ENCODE measurements at regions of chr18 and their contacts with region 1.

Region 1: GRCh38 chr18:47754311-47755101 is 176.0 kb downstream of the SMAD2 start:
- DNase-seq: no peak
- ATAC-seq: peak; percentile 48

Region 2: DNA sequence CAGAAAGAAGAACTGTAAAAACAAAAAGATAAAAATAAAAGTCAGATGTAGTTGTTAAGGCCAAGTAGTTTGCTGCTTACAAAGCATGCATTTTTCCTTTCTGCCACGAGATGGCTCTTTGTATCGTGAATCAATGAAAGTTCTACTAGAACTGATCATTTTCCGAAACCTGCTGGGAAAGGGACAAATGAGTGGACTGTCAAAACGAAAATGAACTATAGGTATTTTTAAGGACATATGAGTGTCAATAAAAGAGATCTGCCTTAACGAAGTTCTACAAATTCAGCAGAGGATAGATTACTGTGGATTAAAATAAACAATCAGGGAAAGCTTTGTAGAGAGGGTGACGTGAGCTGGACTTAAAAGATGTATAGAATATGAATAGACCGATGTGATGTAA is 704.0 kb before region 1 on chr18:
- intact Hi-C with region 1: loop called (anchors 5 kb)
- DNase-seq: no peak
- ATAC-seq: no peak

Region 3: DNA sequence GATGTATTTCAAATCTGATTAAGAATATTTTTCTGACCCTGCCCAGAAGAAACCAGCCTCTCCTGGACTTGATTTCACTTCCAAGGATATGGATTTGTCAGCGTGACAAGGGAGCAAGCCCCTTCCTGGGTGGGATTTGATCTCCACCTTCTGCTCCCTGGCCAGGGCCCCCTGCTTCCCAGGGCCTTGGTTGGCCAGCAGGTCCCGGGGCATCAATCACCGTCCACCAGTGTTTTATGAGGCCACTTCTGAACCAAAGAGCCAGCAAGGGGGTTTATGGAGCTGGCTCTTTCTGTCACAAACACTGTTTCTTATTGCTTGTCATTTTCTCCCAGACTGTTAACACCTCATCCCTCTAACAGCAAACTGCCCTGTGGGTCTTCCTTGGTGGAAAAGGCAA is 182.5 kb before region 1 on chr18:
- intact Hi-C with region 1: no loop called
- DNase-seq: no peak
- ATAC-seq: no peak

Region 4: GRCh38 chr18:47628240-47628781 is 126.2 kb before region 1 on chr18:
- intact Hi-C with region 1: no loop called
- DNase-seq: no peak
- ATAC-seq: no peak

Region 5: GRCh38 chr18:47701133-47701532 is 53.4 kb before region 1 on chr18:
- intact Hi-C with region 1: no loop called
- DNase-seq: no peak
- ATAC-seq: no peak

Region 6: DNA sequence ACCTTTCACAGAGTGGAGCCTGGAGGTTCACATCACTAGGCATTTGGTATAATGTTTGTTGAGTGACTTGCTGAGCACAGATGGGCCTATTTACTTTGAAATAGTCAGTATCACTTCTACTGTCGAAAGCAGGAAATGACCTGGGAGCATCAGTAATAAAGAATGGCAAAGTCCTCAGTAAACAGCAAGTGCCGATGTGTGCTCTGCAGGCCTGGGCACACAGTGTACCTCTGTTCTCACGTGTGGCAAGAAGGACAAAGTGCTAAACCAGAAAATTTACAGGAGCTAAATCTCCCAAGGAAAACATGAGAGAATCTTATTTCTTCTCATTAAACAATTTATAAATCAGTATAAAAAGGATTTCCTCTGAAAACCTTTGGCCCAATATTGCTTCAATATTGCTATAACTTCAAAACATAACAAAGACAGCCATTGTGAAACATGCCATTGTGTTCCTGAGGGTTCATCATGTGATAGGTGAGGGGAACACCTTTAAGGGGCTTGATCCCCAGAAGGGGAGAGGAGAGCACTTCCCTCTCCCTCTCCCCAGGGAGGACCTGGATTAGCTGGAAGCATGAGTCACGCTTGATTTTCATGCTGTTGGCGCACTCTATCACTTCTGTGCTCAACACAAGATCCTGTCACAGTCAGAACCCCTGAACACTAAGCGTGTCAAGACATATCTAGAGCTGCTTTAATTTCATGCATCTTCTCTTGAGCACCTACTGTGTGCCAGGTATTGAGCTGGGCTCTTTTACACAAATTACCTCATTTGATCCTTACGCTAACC is 307.5 kb after region 1 on chr18:
- intact Hi-C with region 1: no loop called
- DNase-seq: no peak
- ATAC-seq: no peak

Measured in Right ventricle myocardium superior (tissue), 1 donor.